WTC11 (cell line): ENCODE measurements at regions of chr11 and their contacts with region 1.

Region 1: GRCh38 chr11:10770626-10771254 is 19.7 kb downstream of the CTR9 start:
- DNase-seq: peak; percentile 61
- ATAC-seq: peak; percentile 41; the same call in 1 of the 2 replicates
- H3K4me3 Mint-ChIP-seq: no peak overlapping the region
- H3K27ac Mint-ChIP-seq: no peak overlapping the region
- H3K4me1 Mint-ChIP-seq: peaks cover 12% of the 10 kb centered on the region
- H3K27me3 Mint-ChIP-seq: no peaks in the 10 kb centered on the region
- CTCF ChIP-seq: peak; percentile 38

Region 2: GRCh38 chr11:10750838-10751580 is 19.7 kb before region 1 on chr11 and contains the start of gene CTR9:
- CTCF ChIA-PET with region 1: interaction called, 14 read pairs
- POLR2A ChIA-PET with region 1: no interaction called
- DNase-seq: peak; percentile 95
- ATAC-seq: peak; percentile 90
- H3K4me3 Mint-ChIP-seq: peak within 1 kb of the TSS; percentile 94
- H3K27ac Mint-ChIP-seq: peak within 1 kb of the TSS; percentile 84
- H3K4me1 Mint-ChIP-seq: peaks cover 4% of the 10 kb centered on the region
- H3K27me3 Mint-ChIP-seq: no peaks in the 10 kb centered on the region
- CTCF ChIP-seq: no peak
- total RNA-seq, gene CTR9: 29.3 to 32.7 TPM (median 31.1 TPM) in 3 replicates

Region 3: GRCh38 chr11:10758957-10759356 is 11.8 kb before region 1 on chr11:
- CTCF ChIA-PET with region 1: interaction called, 15 read pairs
- POLR2A ChIA-PET with region 1: no interaction called
- DNase-seq: no peak
- ATAC-seq: peak; percentile 58; the same call in 1 of the 2 replicates
- H3K4me3 Mint-ChIP-seq: no peak overlapping the region
- H3K27ac Mint-ChIP-seq: no peak overlapping the region
- H3K4me1 Mint-ChIP-seq: no peaks in the 10 kb centered on the region
- H3K27me3 Mint-ChIP-seq: no peaks in the 10 kb centered on the region
- CTCF ChIP-seq: no peak

Region 4: DNA sequence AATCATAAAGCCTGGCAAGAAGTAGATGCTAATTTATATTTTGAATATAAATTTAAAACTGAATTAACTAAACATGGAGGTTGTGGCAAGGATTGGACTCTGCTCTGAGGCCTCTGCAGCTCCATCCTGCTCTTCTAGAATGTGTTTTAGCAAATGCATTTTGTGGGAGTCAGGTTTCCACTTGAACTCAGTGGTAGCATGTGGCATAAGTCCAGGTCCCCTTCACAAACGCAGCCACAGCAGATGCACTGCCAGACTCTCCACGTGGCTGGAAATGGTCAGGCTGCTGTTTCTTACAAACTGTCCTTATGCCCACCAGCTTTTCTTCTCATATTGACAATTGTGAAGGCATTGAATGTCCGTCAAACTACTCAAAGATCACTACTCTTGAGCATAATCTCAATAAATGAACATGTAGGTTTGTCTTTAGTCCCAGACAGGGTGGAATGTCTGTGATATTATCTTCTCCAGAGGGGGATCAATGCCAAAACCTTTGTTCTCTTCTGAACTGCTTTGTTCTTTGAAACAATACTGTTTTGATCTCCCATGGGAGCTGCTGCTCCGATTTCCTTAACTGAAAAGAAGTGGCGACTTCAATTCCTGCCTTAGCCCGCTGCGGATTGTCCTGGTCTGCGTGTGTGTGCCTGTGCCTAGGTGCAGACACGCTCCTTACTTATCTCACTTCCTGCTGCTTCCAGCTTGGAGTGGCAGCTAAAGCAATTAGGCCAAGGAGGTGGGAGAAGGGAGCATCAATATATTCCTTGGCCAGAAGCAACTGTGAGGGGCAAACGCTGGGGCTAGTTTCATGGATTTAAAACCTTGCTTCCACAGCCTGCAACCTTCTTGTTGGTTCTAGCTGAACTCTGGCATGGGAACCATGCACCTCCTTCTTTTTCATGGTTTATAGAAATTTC is 13.7 kb after region 1 on chr11:
- CTCF ChIA-PET with region 1: interaction called, 21 read pairs
- POLR2A ChIA-PET with region 1: no interaction called
- DNase-seq: no peak
- ATAC-seq: no peak; the same call in 1 of the 2 replicates
- H3K4me3 Mint-ChIP-seq: no peak overlapping the region
- H3K27ac Mint-ChIP-seq: no peak overlapping the region; the same call in 1 of the 2 replicates
- H3K4me1 Mint-ChIP-seq: peaks cover 11% of the 10 kb centered on the region
- H3K27me3 Mint-ChIP-seq: no peaks in the 10 kb centered on the region; the same call in 1 of the 2 replicates
- CTCF ChIP-seq: no peak

Region 5: GRCh38 chr11:10955616-10956015 is 184.9 kb after region 1 on chr11:
- CTCF ChIA-PET with region 1: no interaction called
- POLR2A ChIA-PET with region 1: no interaction called
- DNase-seq: no peak
- ATAC-seq: no peak
- H3K4me3 Mint-ChIP-seq: no peak overlapping the region
- H3K27ac Mint-ChIP-seq: no peak overlapping the region
- H3K4me1 Mint-ChIP-seq: peaks cover 4% of the 10 kb centered on the region
- H3K27me3 Mint-ChIP-seq: no peaks in the 10 kb centered on the region; the same call in 1 of the 2 replicates
- CTCF ChIP-seq: no peak

Region 6: GRCh38 chr11:11022125-11022730 is 251.5 kb after region 1 on chr11:
- CTCF ChIA-PET with region 1: interaction called, 13 read pairs
- POLR2A ChIA-PET with region 1: no interaction called
- DNase-seq: no peak
- ATAC-seq: peak; percentile 47; the same call in 1 of the 2 replicates
- H3K4me3 Mint-ChIP-seq: no peak overlapping the region
- H3K27ac Mint-ChIP-seq: no peak overlapping the region
- H3K4me1 Mint-ChIP-seq: peaks cover 12% of the 10 kb centered on the region
- H3K27me3 Mint-ChIP-seq: no peaks in the 10 kb centered on the region
- CTCF ChIP-seq: no peak

Region 7: DNA sequence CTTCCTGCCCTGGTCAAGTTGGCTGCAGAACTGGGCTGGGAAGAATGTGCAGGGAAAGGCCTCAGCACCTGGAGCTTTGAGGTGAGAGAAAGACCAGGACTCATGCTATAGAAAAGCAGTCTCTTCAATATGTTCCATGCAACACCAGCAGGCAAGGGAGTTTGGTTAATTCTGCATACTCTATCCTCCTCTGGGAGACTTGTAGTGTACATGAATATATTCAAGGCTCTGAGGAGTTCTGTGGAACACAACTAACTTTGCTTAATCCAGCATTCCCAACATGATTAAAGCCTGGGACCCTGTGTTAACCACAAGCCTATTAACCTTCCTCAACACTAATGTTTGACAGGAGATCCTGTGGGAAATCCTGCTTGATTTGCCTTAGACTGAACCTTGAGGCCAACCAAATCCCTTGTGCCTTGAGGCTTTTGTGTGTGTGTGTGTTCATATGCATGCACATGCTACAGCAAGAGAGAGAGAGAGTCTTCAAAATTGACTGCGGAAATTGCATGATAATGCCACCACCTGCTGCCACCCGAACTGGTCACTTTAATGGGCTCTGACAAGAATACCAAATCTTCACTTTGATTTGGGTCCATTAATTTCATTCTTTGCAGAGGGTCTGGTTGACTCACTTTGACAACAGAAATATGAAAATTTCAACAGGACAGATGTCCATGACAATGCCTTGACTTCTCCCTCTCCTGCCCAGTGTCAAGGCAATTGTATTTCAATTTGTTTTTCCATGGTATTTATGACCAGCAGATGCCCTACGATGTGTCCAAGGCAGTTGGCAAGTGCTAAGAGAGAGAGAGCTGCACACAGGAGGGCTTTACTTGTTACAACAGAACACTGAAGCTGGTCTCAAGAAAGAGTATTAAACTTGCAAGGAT is 325.3 kb after region 1 on chr11:
- CTCF ChIA-PET with region 1: no interaction called
- POLR2A ChIA-PET with region 1: no interaction called
- DNase-seq: no peak
- ATAC-seq: no peak
- H3K4me3 Mint-ChIP-seq: no peak overlapping the region
- H3K27ac Mint-ChIP-seq: no peak overlapping the region
- H3K4me1 Mint-ChIP-seq: peaks cover 19% of the 10 kb centered on the region
- H3K27me3 Mint-ChIP-seq: peaks cover 4% of the 10 kb centered on the region; the same call in 1 of the 2 replicates
- CTCF ChIP-seq: no peak